Sigmoid colon (tissue), 7 donors: ENCODE measurements at regions of chr5 and their contacts with region 1.

Region 1: DNA sequence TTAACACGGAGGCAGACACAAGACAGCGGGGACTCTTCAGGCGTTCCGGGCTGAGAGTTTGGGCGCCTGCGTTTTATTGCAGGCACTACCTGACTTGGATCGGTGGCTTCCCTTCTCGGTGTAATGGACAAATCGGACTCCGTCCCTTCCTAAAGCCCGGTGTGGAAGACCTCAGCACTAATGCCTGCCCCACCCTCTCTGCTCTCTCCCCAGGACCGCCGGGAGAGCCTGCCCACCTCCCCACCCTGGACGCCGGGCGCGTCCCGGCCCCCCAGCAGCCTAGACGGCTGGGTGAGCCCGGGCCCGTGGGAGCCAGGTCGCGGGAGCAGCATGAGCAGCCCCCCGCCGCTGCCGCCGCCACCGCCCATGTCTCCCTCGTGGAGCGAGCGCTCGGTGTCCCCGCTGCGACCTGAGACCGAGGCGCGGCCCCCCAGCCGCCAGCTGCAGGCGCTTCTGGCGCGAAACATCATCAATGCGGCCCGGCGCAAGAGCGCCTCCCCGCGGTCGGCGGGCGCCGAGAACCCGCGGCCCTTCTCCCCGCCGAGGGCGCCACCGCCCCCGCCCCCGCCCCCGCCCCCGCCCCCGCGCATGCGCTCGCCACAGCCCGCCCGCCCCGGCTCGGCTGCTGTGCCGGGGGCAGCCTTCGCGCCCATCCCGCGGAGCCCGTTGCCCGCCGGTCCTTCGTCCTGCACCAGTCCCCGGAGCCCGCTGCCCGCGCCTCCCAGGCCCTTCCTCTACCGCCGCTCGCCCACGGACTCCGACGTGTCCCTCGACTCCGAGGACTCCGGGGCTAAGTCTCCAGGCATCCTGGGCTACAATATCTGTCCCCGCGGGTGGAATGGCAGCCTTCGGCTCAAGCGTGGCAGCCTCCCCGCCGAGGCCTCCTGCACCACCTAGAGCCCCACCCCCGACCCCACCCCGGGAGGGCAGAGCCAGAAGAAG is 4.6 kb upstream of the MYOZ3 start:
- DNase-seq: peak; percentile 88
- H3K4me3 ChIP-seq: peak overlapping the region; percentile 46 to 62 (median 58)
- H3K27ac ChIP-seq: peak overlapping the region; percentile 66 to 76 (median 70)
- H3K4me1 ChIP-seq: peaks cover 0 to 40% (median 27%) of the 10 kb centered on the region in 4 donors
- H3K27me3 ChIP-seq: no peaks in the 10 kb centered on the region
- CTCF ChIP-seq: peak; percentile 22 to 65 (median 43)
- EP300 ChIP-seq: no peak
- POLR2A ChIP-seq: no peak

Region 2: GRCh38 chr5:150458819-150459557 is 197.5 kb before region 1 on chr5:
- intact Hi-C with region 1: loop called (anchors 5 kb)
- DNase-seq: peak; percentile 88
- H3K4me3 ChIP-seq: peak overlapping the region in 2 of 4 donors; percentile 13 to 34
- H3K27ac ChIP-seq: peak overlapping the region in 2 of 4 donors; percentile 3 to 41
- H3K4me1 ChIP-seq: peaks cover 0 to 12% (median 8%) of the 10 kb centered on the region in 4 donors
- H3K27me3 ChIP-seq: no peaks in the 10 kb centered on the region
- CTCF ChIP-seq: peak; percentile 51 to 92 (median 60)
- EP300 ChIP-seq: no peak
- POLR2A ChIP-seq: no peak

Region 3: GRCh38 chr5:150560401-150561193 is 95.9 kb before region 1 on chr5:
- intact Hi-C with region 1: loop called (anchors 1 kb)
- DNase-seq: peak; percentile 93
- H3K4me3 ChIP-seq: no peak overlapping the region
- H3K27ac ChIP-seq: no peak overlapping the region
- H3K4me1 ChIP-seq: peaks cover 0 to 13% (median 3%) of the 10 kb centered on the region in 4 donors
- H3K27me3 ChIP-seq: no peaks in the 10 kb centered on the region
- CTCF ChIP-seq: peak; percentile 87 to 96 (median 89)
- EP300 ChIP-seq: no peak
- POLR2A ChIP-seq: no peak

Region 4: GRCh38 chr5:150589871-150590601 is 66.4 kb before region 1 on chr5:
- intact Hi-C with region 1: loop called (anchors 1 kb)
- DNase-seq: peak; percentile 92
- H3K4me3 ChIP-seq: no peak overlapping the region
- H3K27ac ChIP-seq: peak overlapping the region; percentile 49 to 67 (median 58)
- H3K4me1 ChIP-seq: peaks cover 0 to 31% (median 16%) of the 10 kb centered on the region in 4 donors
- H3K27me3 ChIP-seq: no peaks in the 10 kb centered on the region
- CTCF ChIP-seq: peak; percentile 39 to 66 (median 56)
- EP300 ChIP-seq: no peak
- POLR2A ChIP-seq: no peak

Region 5: GRCh38 chr5:150615141-150615699 is 41.2 kb before region 1 on chr5:
- intact Hi-C with region 1: loop called (anchors 5 kb)
- DNase-seq: no peak
- H3K4me3 ChIP-seq: no peak overlapping the region
- H3K27ac ChIP-seq: peak overlapping the region; percentile 28 to 84 (median 58)
- H3K4me1 ChIP-seq: peaks cover 0 to 76% (median 63%) of the 10 kb centered on the region in 4 donors
- H3K27me3 ChIP-seq: no peaks in the 10 kb centered on the region
- CTCF ChIP-seq: no peak
- EP300 ChIP-seq: no peak
- POLR2A ChIP-seq: no peak

Region 6: GRCh38 chr5:150700594-150701293 is 44.3 kb after region 1 on chr5 and contains the start of gene RBM22:
- intact Hi-C with region 1: loop called (anchors 5 kb)
- DNase-seq: peak; percentile 96
- H3K4me3 ChIP-seq: peak within 1 kb of the TSS; percentile 75 to 96 (median 92)
- H3K27ac ChIP-seq: peak within 1 kb of the TSS; percentile 94 to 98 (median 96)
- H3K4me1 ChIP-seq: peaks cover 0 to 22% (median 16%) of the 10 kb centered on the region in 4 donors
- H3K27me3 ChIP-seq: no peaks in the 10 kb centered on the region
- CTCF ChIP-seq: peak; percentile 52 to 73 (median 63)
- EP300 ChIP-seq: peak in 1 of 4 donors; percentile 18
- POLR2A ChIP-seq: peak; percentile 56 to 60
- total RNA-seq, gene RBM22: 30.0 to 34.1 (median 31.8) TPM